Dendritic cell treated with granulocyte-macrophage colony-stimulating factor and Interleukin-4, amounts not matched to agents 40 ng/mL and 50 ng/mL, for 4 days (primary cell): ENCODE measurements at regions of chr3 and their contacts with region 1.

Region 1: GRCh38 chr3:102229062-102229655 is 205.7 kb upstream of the ZPLD1 start:
- H3K4me3 Mint-ChIP-seq: no peak overlapping the region
- H3K27ac Mint-ChIP-seq: no peak overlapping the region
- H3K4me1 Mint-ChIP-seq: peaks cover 11% of the 10 kb centered on the region
- H3K27me3 Mint-ChIP-seq: peaks cover 3% of the 10 kb centered on the region

Region 2: GRCh38 chr3:101703169-101703568 is 526.0 kb before region 1 on chr3:
- intact Hi-C with region 1: loop called (anchors 10 kb)
- H3K4me3 Mint-ChIP-seq: no peak overlapping the region
- H3K27ac Mint-ChIP-seq: no peak overlapping the region
- H3K4me1 Mint-ChIP-seq: no peaks in the 10 kb centered on the region
- H3K27me3 Mint-ChIP-seq: no peaks in the 10 kb centered on the region

Region 3: DNA sequence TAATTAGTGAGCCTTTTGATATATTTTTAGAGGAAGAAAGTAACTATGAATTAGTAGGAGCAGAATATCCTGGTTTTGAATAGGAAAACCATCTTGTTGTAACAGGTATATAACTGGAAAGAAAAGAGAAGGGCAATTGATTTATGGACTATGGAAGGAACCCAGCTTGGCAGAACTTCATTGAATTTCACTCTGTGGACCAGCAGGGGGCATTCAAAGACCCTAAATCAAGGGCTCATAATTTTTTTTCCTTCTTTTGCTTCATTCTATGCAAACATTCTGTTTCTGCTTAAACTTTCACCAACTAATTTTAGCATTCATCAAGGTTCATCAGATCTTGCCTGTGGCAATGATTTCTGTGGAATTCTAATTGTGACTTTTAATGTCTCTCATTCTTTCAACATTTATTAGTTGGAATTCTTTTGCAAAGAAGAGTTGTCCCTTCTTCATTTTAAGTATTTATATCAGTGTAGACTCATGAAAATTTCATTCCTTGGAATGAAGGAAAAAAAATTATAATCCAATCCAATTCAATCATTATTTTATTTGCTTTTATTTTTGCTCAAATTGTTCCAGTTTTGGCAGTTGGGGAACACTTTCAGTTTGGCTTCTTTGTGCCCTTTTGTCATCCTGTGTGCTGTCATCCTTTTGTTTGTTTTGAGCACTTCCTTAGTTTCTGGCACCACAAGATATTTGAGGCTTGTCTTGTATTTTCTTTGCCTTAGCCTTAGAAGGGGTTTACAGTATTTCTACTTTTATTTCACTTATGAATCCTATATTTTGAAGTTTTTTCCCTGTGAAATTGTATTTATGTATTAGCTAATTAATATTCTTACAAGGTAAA is 419.8 kb before region 1 on chr3:
- intact Hi-C with region 1: loop called (anchors 2 kb)
- H3K4me3 Mint-ChIP-seq: no peak overlapping the region
- H3K27ac Mint-ChIP-seq: no peak overlapping the region
- H3K4me1 Mint-ChIP-seq: peaks cover 10% of the 10 kb centered on the region
- H3K27me3 Mint-ChIP-seq: no peaks in the 10 kb centered on the region

Region 4: GRCh38 chr3:102536456-102536855 is 307.3 kb after region 1 on chr3:
- intact Hi-C with region 1: loop called (anchors 2 kb)
- H3K4me3 Mint-ChIP-seq: no peak overlapping the region
- H3K27ac Mint-ChIP-seq: no peak overlapping the region
- H3K4me1 Mint-ChIP-seq: peaks cover 8% of the 10 kb centered on the region
- H3K27me3 Mint-ChIP-seq: no peaks in the 10 kb centered on the region